Gastrocnemius medialis (tissue), 4 donors: ENCODE measurements at regions of chr12 and their contacts with region 1.

Region 1: GRCh38 chr12:103930034-103930786 is at the start of gene HSP90B1:
- DNase-seq: peak; percentile 100
- ATAC-seq: peak; percentile 90 to 93
- H3K4me3 ChIP-seq: peak within 1 kb of the TSS; percentile 79 to 91 (median 88)
- H3K27ac ChIP-seq: peak within 1 kb of the TSS; percentile 91 to 97 (median 94)
- H3K4me1 ChIP-seq: peaks cover 49 to 50% of the 10 kb centered on the region in 2 donors
- H3K27me3 ChIP-seq: no peaks in the 10 kb centered on the region
- CTCF ChIP-seq: no peak
- POLR2A ChIP-seq: peak; percentile 90 to 97
- total RNA-seq, gene HSP90B1: 60.3 to 94.8 (median 79.3) TPM

Region 2: DNA sequence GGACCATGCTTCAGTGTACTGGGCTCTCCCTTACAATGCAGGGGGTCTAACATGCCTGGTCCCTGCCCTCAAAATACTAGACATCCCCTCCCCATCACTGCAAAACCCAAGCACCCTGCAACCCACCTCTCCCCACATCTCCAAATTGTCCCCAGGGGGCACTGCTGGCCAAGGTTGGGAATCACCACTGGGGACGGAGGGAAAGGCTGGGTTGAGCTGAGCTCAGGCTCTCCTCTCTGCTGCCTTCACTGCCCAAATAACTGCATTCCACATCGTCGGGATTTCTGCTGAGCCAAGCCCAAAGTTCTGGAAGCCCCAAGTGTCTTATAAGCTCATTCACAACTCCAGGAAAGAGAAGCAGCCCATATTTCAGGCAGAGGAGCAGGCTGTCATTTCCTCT is 158.7 kb before region 1 on chr12:
- in situ Hi-C with region 1: no loop called
- intact Hi-C with region 1: loop called (anchors 2 kb)
- DNase-seq: peak in 1 of 2 donors; percentile 34
- ATAC-seq: peak; percentile 39 to 61
- H3K4me3 ChIP-seq: no peak overlapping the region
- H3K27ac ChIP-seq: no peak overlapping the region
- H3K4me1 ChIP-seq: peaks cover 5 to 6% of the 10 kb centered on the region in 2 donors
- H3K27me3 ChIP-seq: no peaks in the 10 kb centered on the region
- CTCF ChIP-seq: peak; percentile 39 to 78 (median 58)
- POLR2A ChIP-seq: no peak

Region 3: GRCh38 chr12:103833891-103834290 is 96.3 kb before region 1 on chr12:
- in situ Hi-C with region 1: no loop called
- intact Hi-C with region 1: no loop called
- DNase-seq: no peak
- ATAC-seq: no peak
- H3K4me3 ChIP-seq: no peak overlapping the region
- H3K27ac ChIP-seq: no peak overlapping the region
- H3K4me1 ChIP-seq: no peaks in the 10 kb centered on the region
- H3K27me3 ChIP-seq: no peaks in the 10 kb centered on the region
- CTCF ChIP-seq: no peak
- POLR2A ChIP-seq: no peak

Region 4: DNA sequence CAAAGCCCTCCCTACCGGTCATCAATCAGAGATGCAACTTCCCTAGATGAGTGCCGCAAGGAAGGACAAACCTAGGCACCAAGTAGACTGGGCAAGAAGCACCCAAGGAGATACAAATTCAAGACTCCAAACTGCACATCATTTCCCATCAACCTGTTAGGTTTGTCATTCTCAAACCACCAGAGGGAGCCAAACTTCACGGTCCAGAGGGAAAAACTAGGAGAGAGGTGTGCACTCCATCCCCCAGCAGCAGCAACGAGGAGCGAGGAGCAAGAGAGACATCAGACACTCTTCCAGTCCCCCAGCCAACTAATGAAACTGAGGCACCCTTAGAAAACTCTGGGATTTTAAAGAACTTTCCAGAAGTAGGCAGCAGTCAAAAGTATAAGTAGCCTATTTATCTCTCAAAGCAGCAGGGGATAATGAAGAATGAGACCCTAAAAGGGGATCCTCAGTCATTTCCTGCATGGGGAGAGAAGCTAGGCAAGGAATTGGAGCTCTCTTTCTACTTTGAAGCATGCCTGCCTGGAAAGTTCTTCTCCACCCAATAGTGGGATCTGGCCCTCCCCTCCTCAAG is 52.2 kb before region 1 on chr12:
- in situ Hi-C with region 1: no loop called
- intact Hi-C with region 1: loop called (anchors 1 kb)
- DNase-seq: peak; percentile 29 to 41
- ATAC-seq: peak; percentile 85 to 90
- H3K4me3 ChIP-seq: no peak overlapping the region
- H3K27ac ChIP-seq: no peak overlapping the region
- H3K4me1 ChIP-seq: no peaks in the 10 kb centered on the region
- H3K27me3 ChIP-seq: no peaks in the 10 kb centered on the region
- CTCF ChIP-seq: peak; percentile 46 to 77 (median 62)
- POLR2A ChIP-seq: no peak

Region 5: GRCh38 chr12:103956516-103957027 is 26.4 kb after region 1 on chr12:
- in situ Hi-C with region 1: no loop called
- intact Hi-C with region 1: loop called (anchors 1 kb)
- DNase-seq: peak in 1 of 2 donors; percentile 34
- ATAC-seq: peak; percentile 36 to 38
- H3K4me3 ChIP-seq: peak overlapping the region; percentile 76 to 87 (median 82)
- H3K27ac ChIP-seq: peak overlapping the region; percentile 81 to 92 (median 92)
- H3K4me1 ChIP-seq: peaks cover 22 to 25% of the 10 kb centered on the region in 2 donors
- H3K27me3 ChIP-seq: no peaks in the 10 kb centered on the region
- CTCF ChIP-seq: no peak
- POLR2A ChIP-seq: no peak

Region 6: DNA sequence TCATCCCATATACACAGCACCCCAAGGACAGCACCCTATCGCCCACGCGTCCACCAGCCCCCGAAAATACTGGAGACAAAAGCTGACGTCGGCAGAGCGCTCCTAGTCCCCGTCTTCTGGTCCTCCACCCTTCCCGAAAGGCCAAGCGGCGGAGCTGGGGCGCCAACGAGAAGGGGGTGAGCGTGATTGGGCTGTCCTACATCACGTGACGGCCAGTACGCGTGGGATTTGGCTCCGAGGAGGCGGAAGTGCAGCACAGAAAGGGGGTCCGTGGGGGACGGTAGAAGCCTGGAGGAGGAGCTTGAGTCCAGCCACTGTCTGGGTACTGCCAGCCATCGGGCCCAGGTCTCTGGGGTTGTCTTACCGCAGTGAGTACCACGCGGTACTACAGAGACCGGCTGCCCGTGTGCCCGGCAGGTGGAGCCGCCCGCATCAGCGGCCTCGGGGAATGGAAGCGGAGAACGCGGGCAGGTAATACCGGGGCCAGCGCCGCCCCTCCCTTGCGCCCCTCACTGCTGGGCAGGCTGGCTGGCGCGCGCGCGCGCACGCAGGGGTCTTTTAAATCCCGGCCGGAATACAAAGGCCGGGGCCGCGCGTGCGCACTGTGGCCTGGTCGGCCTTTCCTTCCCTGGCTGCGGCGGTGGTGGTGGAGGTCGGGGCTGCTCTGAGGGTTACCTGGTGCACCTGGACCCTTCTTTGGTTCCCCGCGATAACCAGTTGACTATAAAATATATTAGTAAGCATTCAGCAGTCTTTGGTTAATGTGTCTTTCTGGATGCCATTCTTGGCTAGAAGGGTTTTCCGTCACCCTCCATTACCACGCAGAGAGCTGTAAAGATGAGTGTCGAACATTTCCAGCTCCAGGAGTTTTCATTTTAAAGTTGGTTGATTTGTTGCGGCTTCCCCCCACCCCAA is 35.6 kb after region 1 on chr12 and contains the start of gene TDG:
- in situ Hi-C with region 1: no loop called
- intact Hi-C with region 1: loop called (anchors 2 kb)
- DNase-seq: peak; percentile 98 to 99
- ATAC-seq: peak; percentile 99 to 100
- H3K4me3 ChIP-seq: peak within 1 kb of the TSS; percentile 74 to 97 (median 88)
- H3K27ac ChIP-seq: peak within 1 kb of the TSS; percentile 90 to 97 (median 95)
- H3K4me1 ChIP-seq: peaks cover 33 to 46% of the 10 kb centered on the region in 2 donors
- H3K27me3 ChIP-seq: no peaks in the 10 kb centered on the region
- CTCF ChIP-seq: peak in 4 of 5 experiments; percentile 26 to 43 (median 35)
- POLR2A ChIP-seq: peak; percentile 86 to 88
- total RNA-seq, gene TDG: 5.1 to 17.5 (median 9.0) TPM

Region 7: DNA sequence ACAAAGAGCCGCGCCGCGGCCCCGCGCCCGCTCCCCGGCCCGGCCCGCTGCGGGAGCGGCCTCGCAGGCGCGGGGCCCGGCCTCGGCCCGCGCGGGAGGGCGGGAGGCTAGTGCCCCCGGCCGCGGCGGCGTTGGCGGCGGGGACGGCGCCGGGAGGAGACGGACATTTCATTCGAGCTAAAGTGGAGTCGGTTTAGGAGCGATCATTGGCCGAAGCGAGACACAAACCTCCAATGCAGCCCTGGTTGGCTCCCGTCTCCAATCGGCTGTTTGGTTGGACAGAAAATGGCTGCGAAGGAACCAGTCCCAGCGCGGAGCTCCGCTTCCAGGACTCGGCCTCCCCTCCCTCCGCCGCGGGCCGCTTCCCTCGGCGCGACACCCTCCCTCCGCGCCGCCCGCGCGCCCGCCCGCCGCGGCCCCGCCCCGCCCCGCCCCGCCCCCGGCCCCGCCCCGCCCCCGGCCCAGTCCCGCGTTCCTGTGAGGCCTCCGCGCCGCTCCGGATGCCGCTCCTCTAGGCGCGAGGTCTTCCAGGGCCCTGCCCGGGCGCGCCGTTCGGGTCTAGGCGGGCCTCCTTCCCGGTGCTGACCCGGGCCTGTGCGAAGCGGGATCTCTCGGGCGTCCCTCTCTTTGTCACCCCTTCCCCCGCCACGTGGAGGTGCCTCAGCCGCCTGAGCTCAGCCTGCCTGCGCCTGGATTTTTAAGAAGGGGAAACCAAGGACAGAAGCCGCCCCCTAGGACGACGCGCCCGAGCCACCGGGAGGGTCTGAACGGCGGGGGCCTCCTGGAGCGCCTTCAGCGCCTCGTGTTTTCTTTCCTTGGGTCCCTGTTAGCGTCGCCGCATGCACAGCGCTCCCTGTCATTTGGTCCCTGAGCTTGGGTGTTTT is 207.9 kb after region 1 on chr12 and contains the start of gene NFYB:
- in situ Hi-C with region 1: no loop called
- intact Hi-C with region 1: loop called (anchors 1 kb)
- DNase-seq: peak; percentile 97
- ATAC-seq: peak; percentile 99
- H3K4me3 ChIP-seq: peak within 1 kb of the TSS; percentile 64 to 78 (median 70)
- H3K27ac ChIP-seq: peak within 1 kb of the TSS; percentile 87 to 93 (median 90)
- H3K4me1 ChIP-seq: peaks cover 30 to 35% of the 10 kb centered on the region in 2 donors
- H3K27me3 ChIP-seq: no peaks in the 10 kb centered on the region
- CTCF ChIP-seq: no peak
- POLR2A ChIP-seq: peak; percentile 58 to 72
- total RNA-seq, gene NFYB: 16.5 to 35.1 (median 21.4) TPM

Region 8: DNA sequence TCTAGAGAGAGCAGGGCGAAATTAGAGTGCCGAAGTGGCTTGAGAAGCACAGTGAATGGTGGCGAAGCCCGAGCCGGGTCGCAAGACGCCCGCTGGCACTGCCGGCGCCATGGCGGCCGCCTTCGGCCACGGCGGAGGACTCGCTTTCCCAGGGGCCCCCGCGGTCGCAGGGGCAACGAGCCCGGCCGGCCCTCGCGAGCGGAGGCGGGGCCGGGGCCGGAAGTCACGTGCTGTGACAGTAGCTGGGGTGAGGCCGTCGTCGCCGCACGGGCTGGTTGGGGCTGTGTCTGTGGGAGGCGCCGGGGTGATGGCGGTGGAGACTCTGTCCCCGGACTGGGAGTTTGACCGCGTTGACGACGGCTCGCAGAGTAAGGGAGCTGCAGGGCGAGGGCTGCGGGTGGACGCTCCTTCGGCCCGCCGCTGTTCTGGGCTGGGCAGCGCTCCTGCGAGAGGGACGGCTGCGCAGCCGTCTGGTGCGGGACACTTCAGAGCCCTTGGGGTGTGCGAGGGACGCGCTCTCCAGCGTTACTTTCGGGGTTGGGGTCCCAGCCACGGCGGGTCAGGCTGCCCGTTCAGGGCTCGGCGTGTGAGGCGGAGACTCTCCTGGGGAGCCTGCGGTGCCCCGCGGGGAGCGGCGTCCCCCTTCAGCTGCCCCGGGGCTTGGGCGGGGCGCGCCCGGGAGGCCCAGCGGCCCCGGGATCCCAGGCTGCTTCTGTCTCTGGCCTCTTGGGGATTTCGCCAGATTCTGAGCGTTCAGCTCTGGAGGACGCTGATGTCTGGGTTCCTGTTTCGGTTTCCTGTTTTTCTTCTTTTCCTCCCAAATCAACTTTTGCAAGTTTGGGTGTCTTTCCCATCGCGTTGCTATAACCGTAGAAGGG is 1177.5 kb after region 1 on chr12 and contains the start of gene WASHC4:
- in situ Hi-C with region 1: no loop called
- intact Hi-C with region 1: loop called (anchors 5 kb)
- DNase-seq: peak; percentile 90
- ATAC-seq: peak; percentile 94 to 96
- H3K4me3 ChIP-seq: peak within 1 kb of the TSS; percentile 91 to 95 (median 93)
- H3K27ac ChIP-seq: peak within 1 kb of the TSS; percentile 92 to 98 (median 96)
- H3K4me1 ChIP-seq: peaks cover 30 to 32% of the 10 kb centered on the region in 2 donors
- H3K27me3 ChIP-seq: no peaks in the 10 kb centered on the region
- CTCF ChIP-seq: peak in 1 of 5 experiments; percentile 16
- POLR2A ChIP-seq: peak; percentile 96 to 97
- total RNA-seq, gene WASHC4: 23.6 to 53.2 (median 36.7) TPM